ENCODE measurements at regions of chr9 and their contacts with region 1.

Region 1: DNA sequence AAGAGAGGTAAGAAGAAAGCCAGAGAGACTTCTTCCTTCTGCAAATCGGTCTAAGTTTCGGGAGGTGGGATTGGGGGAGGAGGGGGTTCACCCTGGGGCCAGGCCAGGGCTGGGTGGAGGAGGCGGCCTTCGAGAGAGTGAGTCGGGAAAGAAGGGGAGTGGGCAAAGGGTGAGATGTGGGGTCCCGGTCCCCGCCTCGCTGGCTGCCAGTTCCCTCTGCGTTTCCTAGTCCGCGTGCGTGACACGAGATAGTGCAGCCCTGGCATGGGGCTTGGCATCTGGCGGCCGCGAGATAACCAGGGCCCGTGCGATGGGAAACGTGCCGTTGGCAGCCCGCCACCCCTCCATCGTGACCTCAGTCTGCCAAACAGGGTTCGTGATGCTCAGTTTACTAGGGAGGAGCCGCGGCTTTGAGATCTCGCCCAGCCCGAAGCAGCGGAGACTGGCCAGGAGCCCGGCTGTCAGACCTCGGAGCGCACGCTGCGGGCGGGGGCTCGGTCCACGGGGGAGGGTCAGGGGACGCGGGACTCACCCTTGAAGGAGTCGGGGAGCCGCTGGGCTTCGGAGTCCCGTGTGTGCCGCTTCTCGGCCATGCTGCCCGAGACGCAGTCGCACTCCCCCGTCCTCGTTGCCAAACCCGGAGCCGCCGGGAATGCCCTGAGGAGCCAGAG is at the start of gene STOM:
- DNase-seq: peak in 3 of 9 donors; percentile 60 to 66 (median 65)
- ATAC-seq: peak; percentile 58
- H3K4me3 ChIP-seq: peak within 1 kb of the TSS; percentile 91
- H3K4me3 Mint-ChIP-seq: peak within 1 kb of the TSS; percentile 88 to 99 (median 94)
- H3K27ac ChIP-seq: peak within 1 kb of the TSS; percentile 76
- H3K27ac Mint-ChIP-seq: peak within 1 kb of the TSS; percentile 87 to 99 (median 96)
- H3K4me1 ChIP-seq: peaks cover 18 to 24% of the 10 kb centered on the region in 2 donors
- H3K4me1 Mint-ChIP-seq: peaks cover 22 to 57% (median 36%) of the 10 kb centered on the region in 7 donors
- H3K27me3 ChIP-seq: no peaks in the 10 kb centered on the region
- H3K27me3 Mint-ChIP-seq: no peaks in the 10 kb centered on the region
- total RNA-seq, gene STOM: 8.8 to 59.8 (median 16.1) TPM

Region 2: GRCh38 chr9:120579750-120580590 is 789.8 kb before region 1 on chr9 and contains the start of gene CDK5RAP2:
- CTCF ChIA-PET with region 1: no interaction called
- POLR2A ChIA-PET with region 1: no interaction called
- intact Hi-C with region 1: loop called in 1 of 2 experiments (anchors 5 kb)
- DNase-seq: peak; percentile 77 to 94 (median 92)
- ATAC-seq: peak; percentile 99
- H3K4me3 ChIP-seq: peak within 1 kb of the TSS; percentile 85
- H3K4me3 Mint-ChIP-seq: peak within 1 kb of the TSS; percentile 86 to 98 (median 94)
- H3K27ac ChIP-seq: peak within 1 kb of the TSS; percentile 81
- H3K27ac Mint-ChIP-seq: peak within 1 kb of the TSS; percentile 88 to 95 (median 91)
- H3K4me1 ChIP-seq: peaks cover 15 to 17% of the 10 kb centered on the region in 2 donors
- H3K4me1 Mint-ChIP-seq: peaks cover 29 to 68% (median 62%) of the 10 kb centered on the region in 7 donors
- H3K27me3 ChIP-seq: no peaks in the 10 kb centered on the region
- H3K27me3 Mint-ChIP-seq: peaks cover 0 to 3% (median 0%) of the 10 kb centered on the region in 5 donors
- total RNA-seq, gene CDK5RAP2: 62.2 to 98.1 (median 78.1) TPM

Region 3: GRCh38 chr9:120792898-120793765 is 576.6 kb before region 1 on chr9 and contains the start of gene FBXW2:
- CTCF ChIA-PET with region 1: no interaction called
- POLR2A ChIA-PET with region 1: no interaction called
- intact Hi-C with region 1: loop called in 1 of 2 experiments (anchors 5 kb)
- DNase-seq: peak; percentile 65 to 96 (median 78)
- ATAC-seq: peak; percentile 91
- H3K4me3 ChIP-seq: peak within 1 kb of the TSS; percentile 66
- H3K4me3 Mint-ChIP-seq: peak within 1 kb of the TSS; percentile 91 to 98 (median 96)
- H3K27ac ChIP-seq: peak within 1 kb of the TSS; percentile 92
- H3K27ac Mint-ChIP-seq: peak within 1 kb of the TSS; percentile 88 to 98 (median 95)
- H3K4me1 ChIP-seq: peaks cover 28 to 34% of the 10 kb centered on the region in 2 donors
- H3K4me1 Mint-ChIP-seq: peaks cover 34 to 65% (median 58%) of the 10 kb centered on the region in 7 donors
- H3K27me3 ChIP-seq: no peaks in the 10 kb centered on the region
- H3K27me3 Mint-ChIP-seq: no peaks in the 10 kb centered on the region
- total RNA-seq, gene FBXW2: 72.5 to 90.3 (median 77.9) TPM

Region 4: DNA sequence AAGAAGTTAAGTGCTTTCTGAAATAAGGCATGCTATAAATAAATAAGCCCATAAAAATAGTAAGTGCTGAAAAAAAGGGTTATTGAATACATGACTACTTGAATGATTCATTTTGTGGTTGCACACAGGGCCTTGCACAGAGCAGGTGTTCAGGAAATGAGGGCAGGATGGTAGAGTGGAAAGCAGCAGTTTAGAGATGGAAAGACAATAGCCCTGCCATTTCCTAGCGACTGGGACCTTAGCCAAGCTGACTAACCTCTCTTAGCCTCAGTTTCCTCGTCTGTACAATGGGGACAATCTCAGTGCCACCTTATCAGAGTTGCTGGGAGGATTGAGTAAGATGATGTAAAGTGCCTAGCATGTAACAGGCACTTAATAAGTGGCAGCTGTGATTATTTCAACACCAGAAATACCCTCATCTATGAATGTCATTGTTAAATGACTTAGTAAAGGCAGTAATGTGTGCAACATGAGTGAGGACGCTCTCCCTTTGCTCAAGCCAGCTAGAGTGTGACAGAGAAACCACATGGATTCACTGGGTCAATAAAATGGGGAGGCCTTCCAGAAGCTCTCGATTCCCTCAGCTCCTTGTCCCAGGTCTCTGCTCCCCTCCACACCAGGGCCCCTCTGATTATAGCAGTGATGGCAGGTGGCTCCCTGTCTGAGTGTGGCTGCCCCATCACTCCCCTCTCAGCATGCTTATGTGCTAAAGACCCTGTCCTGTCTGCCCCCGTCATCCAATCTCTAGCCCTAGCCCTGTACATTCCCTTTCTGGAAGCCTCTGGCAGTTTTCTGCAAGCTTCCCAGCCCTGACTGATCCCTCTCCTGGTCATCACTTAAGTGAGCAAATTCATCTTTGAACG is 476.8 kb before region 1 on chr9:
- CTCF ChIA-PET with region 1: no interaction called
- POLR2A ChIA-PET with region 1: no interaction called
- intact Hi-C with region 1: no loop called
- DNase-seq: peak in 7 of 9 donors; percentile 43 to 77 (median 64)
- ATAC-seq: peak; percentile 65
- H3K4me3 ChIP-seq: peak overlapping the region; percentile 17
- H3K4me3 Mint-ChIP-seq: peak overlapping the region; percentile 54 to 85 (median 80)
- H3K27ac ChIP-seq: peak overlapping the region; percentile 90
- H3K27ac Mint-ChIP-seq: peak overlapping the region; percentile 92 to 100 (median 99)
- H3K4me1 ChIP-seq: peaks cover 64 to 91% of the 10 kb centered on the region in 2 donors
- H3K4me1 Mint-ChIP-seq: peaks cover 40 to 88% (median 74%) of the 10 kb centered on the region in 7 donors
- H3K27me3 ChIP-seq: no peaks in the 10 kb centered on the region
- H3K27me3 Mint-ChIP-seq: no peaks in the 10 kb centered on the region

Region 5: DNA sequence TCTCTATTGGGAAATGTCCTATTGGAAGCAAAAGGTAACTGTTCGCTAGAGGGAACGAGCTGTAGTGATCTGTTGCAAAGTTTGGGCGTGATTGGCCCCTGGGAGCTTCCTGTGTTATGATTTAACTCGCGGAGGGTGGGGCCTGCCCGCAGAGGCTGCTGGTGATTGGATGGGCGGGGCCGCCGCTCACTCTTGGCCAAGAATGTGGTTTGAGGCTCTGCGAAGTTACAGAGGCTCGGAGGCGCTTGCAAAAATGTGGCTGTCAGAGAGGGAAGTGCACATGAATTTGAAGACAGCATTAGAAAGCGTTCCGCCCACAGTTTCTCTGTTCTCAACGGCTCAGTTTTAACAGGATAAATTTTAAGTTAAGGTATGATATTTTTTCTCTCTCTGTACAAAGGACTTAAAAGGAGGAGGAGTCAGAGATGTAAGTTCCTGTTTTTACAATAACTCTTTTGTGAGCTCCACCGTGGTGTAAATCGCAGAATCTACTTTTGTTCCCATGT is 248.1 kb before region 1 on chr9:
- CTCF ChIA-PET with region 1: no interaction called
- POLR2A ChIA-PET with region 1: no interaction called
- intact Hi-C with region 1: loop called in 1 of 2 experiments (anchors 2 kb)
- DNase-seq: peak; percentile 83 to 98 (median 97)
- ATAC-seq: peak; percentile 100
- H3K4me3 ChIP-seq: peak overlapping the region; percentile 87
- H3K4me3 Mint-ChIP-seq: peak overlapping the region; percentile 87 to 96 (median 89)
- H3K27ac ChIP-seq: peak overlapping the region; percentile 88
- H3K27ac Mint-ChIP-seq: peak overlapping the region; percentile 87 to 99 (median 93)
- H3K4me1 ChIP-seq: peaks cover 20 to 26% of the 10 kb centered on the region in 2 donors
- H3K4me1 Mint-ChIP-seq: peaks cover 27 to 63% (median 54%) of the 10 kb centered on the region in 7 donors
- H3K27me3 ChIP-seq: no peaks in the 10 kb centered on the region
- H3K27me3 Mint-ChIP-seq: no peaks in the 10 kb centered on the region

Region 6: GRCh38 chr9:121350993-121351561 is 18.7 kb before region 1 on chr9:
- CTCF ChIA-PET with region 1: no interaction called
- POLR2A ChIA-PET with region 1: interaction called, 3 read pairs
- intact Hi-C with region 1: loop called (anchors 1 to 2 kb)
- DNase-seq: no peak
- ATAC-seq: no peak
- H3K4me3 ChIP-seq: no peak overlapping the region
- H3K4me3 Mint-ChIP-seq: no peak overlapping the region
- H3K27ac ChIP-seq: no peak overlapping the region
- H3K27ac Mint-ChIP-seq: no peak overlapping the region
- H3K4me1 ChIP-seq: peaks cover 0 to 46% of the 10 kb centered on the region in 2 donors
- H3K4me1 Mint-ChIP-seq: peaks cover 0 to 51% (median 8%) of the 10 kb centered on the region in 7 donors
- H3K27me3 ChIP-seq: no peaks in the 10 kb centered on the region
- H3K27me3 Mint-ChIP-seq: no peaks in the 10 kb centered on the region

Region 7: GRCh38 chr9:121399883-121400607 is 30.3 kb after region 1 on chr9:
- CTCF ChIA-PET with region 1: interaction called, 3 read pairs
- POLR2A ChIA-PET with region 1: no interaction called
- intact Hi-C with region 1: loop called in 1 of 2 experiments (anchors 1 kb)
- DNase-seq: peak in 7 of 9 donors; percentile 25 to 67 (median 54)
- ATAC-seq: peak; percentile 66
- H3K4me3 ChIP-seq: no peak overlapping the region
- H3K4me3 Mint-ChIP-seq: no peak overlapping the region
- H3K27ac ChIP-seq: no peak overlapping the region
- H3K27ac Mint-ChIP-seq: no peak overlapping the region
- H3K4me1 ChIP-seq: no peaks in the 10 kb centered on the region
- H3K4me1 Mint-ChIP-seq: peaks cover 0 to 6% (median 0%) of the 10 kb centered on the region in 7 donors
- H3K27me3 ChIP-seq: no peaks in the 10 kb centered on the region
- H3K27me3 Mint-ChIP-seq: peaks cover 0 to 21% (median 0%) of the 10 kb centered on the region in 5 donors